ENCODE measurements at regions of chr17 and their contacts with region 1.

Region 1: GRCh38 chr17:45317112-45317928 is 500 bp upstream of the MAP3K14 start:
- DNase-seq: peak; percentile 99 to 100
- H3K4me3 ChIP-seq: peak overlapping the region; percentile 60 to 89
- H3K27ac ChIP-seq: peak overlapping the region; percentile 95
- H3K4me1 ChIP-seq: peaks cover 81% of the 10 kb centered on the region
- H3K27me3 ChIP-seq: no peaks in the 10 kb centered on the region
- CTCF ChIP-seq: no peak
- POLR2A ChIP-seq: no peak

Region 2: DNA sequence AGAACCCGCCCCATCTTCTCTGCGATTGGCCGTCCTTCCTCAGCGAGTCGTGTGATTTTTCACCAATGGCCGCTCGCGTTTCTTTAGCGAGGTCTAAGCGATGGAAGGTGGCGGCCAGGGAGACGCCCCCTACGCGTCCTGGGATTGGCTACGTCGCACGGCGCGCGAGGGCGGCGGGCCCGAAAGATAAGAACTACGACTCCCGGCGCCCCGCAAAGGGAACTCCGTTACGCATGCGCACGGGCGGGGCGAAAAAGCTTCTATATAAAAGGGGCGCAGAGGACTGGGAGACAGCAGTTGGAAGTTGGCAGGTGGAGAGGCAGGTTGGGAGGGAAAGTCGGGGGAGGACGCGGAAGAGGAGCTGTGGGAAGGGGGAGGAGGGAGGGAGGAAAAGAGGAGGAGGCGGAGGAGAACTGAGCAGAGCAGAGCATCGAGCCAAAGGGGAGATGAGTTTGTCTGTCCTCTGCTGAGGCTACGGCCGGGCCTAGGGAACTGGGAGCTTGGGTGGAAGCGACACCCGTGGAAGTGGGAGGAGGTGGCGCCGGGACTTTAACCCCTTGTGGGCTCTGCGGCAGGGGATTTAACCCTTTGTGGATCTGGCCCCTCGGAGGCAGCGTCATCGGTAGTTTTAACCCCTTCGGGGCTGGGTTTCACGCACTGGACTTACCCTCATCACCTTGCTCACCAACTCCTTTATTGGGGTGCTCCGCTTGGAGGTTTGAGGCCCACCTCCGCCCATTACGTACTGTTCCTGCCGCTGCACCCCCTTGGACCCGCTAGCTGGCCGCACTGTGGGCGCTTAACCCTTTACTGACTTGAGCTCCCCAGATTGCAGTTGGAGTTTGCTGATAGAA is 168.9 kb before region 1 on chr17 and contains the start of gene HEXIM1:
- intact Hi-C with region 1: loop called (anchors 10 kb)
- DNase-seq: peak; percentile 97 to 100
- H3K4me3 ChIP-seq: peak within 1 kb of the TSS; percentile 68 to 78
- H3K27ac ChIP-seq: peak within 1 kb of the TSS; percentile 99
- H3K4me1 ChIP-seq: peaks cover 59% of the 10 kb centered on the region
- H3K27me3 ChIP-seq: no peaks in the 10 kb centered on the region
- CTCF ChIP-seq: no peak
- POLR2A ChIP-seq: peak in 1 of 2 donors; percentile 99
- total RNA-seq, gene HEXIM1: 27.5 TPM

Region 3: DNA sequence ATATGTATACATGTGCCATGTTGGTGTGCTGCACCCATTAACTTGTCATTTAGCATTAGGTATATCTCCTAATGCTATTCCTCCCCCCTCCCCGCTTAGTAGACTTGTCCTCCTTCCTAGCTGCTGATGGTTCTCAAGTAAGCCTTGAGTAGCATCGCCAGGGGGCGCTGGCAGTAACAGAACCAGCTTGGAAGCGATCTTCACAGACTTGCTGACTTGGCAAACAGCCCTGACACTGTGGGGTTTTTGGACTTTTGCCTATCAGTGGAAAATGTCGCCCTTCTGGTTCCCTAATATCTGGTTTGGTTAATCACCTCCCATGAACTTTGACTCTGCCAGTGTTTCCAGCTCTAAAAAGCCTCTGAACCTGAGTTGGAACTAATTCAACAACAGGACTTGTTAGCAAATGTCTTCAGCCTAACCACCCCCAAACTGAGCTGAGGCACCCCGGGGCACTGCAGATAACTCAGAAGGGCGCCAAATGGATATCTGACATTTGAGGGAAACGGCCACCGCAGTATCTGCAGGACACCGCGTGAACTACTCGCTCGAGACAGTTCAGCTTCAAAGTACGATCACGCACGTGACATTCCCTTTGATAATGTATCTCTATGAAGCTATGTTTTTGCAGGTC is 40.0 kb before region 1 on chr17:
- intact Hi-C with region 1: loop called (anchors 5 kb)
- DNase-seq: no peak
- H3K4me3 ChIP-seq: no peak overlapping the region
- H3K27ac ChIP-seq: peak overlapping the region; percentile 46
- H3K4me1 ChIP-seq: peaks cover 24% of the 10 kb centered on the region
- H3K27me3 ChIP-seq: no peaks in the 10 kb centered on the region
- CTCF ChIP-seq: peak; percentile 75 to 94 (median 85)
- POLR2A ChIP-seq: no peak

Region 4: GRCh38 chr17:45371414-45372327 is 54.4 kb after region 1 on chr17:
- intact Hi-C with region 1: loop called (anchors 10 kb)
- DNase-seq: peak; percentile 84 to 89
- H3K4me3 ChIP-seq: peak overlapping the region; percentile 17 to 42
- H3K27ac ChIP-seq: peak overlapping the region; percentile 72
- H3K4me1 ChIP-seq: peaks cover 11% of the 10 kb centered on the region
- H3K27me3 ChIP-seq: no peaks in the 10 kb centered on the region
- CTCF ChIP-seq: no peak
- POLR2A ChIP-seq: no peak

Measured in vagina (tissue), 2 donors.